ENCODE measurements at regions of chr6 and their contacts with region 1.

Region 1: GRCh38 chr6:167512696-167513375 is 187.9 kb downstream of the TTLL2 start:
- DNase-seq: no peak
- H3K4me3 ChIP-seq: no peak overlapping the region
- H3K27ac ChIP-seq: no peak overlapping the region
- H3K4me1 ChIP-seq: no peaks in the 10 kb centered on the region
- H3K27me3 ChIP-seq: peaks cover 0 to 5% of the 10 kb centered on the region in 2 donors
- CTCF ChIP-seq: no peak
- POLR2A ChIP-seq: no peak

Region 2: GRCh38 chr6:166333172-166333995 is 1179.5 kb before region 1 on chr6:
- intact Hi-C with region 1: no loop called
- DNase-seq: no peak
- H3K4me3 ChIP-seq: peak overlapping the region in 1 of 3 donors; percentile 26
- H3K27ac ChIP-seq: no peak overlapping the region
- H3K4me1 ChIP-seq: no peaks in the 10 kb centered on the region
- H3K27me3 ChIP-seq: no peaks in the 10 kb centered on the region
- CTCF ChIP-seq: no peak
- POLR2A ChIP-seq: no peak

Region 3: GRCh38 chr6:167455371-167455770 is 57.5 kb before region 1 on chr6:
- intact Hi-C with region 1: loop called (anchors 2 kb)
- DNase-seq: no peak
- H3K4me3 ChIP-seq: no peak overlapping the region
- H3K27ac ChIP-seq: no peak overlapping the region
- H3K4me1 ChIP-seq: no peaks in the 10 kb centered on the region
- H3K27me3 ChIP-seq: no peaks in the 10 kb centered on the region
- CTCF ChIP-seq: no peak
- POLR2A ChIP-seq: no peak

Region 4: DNA sequence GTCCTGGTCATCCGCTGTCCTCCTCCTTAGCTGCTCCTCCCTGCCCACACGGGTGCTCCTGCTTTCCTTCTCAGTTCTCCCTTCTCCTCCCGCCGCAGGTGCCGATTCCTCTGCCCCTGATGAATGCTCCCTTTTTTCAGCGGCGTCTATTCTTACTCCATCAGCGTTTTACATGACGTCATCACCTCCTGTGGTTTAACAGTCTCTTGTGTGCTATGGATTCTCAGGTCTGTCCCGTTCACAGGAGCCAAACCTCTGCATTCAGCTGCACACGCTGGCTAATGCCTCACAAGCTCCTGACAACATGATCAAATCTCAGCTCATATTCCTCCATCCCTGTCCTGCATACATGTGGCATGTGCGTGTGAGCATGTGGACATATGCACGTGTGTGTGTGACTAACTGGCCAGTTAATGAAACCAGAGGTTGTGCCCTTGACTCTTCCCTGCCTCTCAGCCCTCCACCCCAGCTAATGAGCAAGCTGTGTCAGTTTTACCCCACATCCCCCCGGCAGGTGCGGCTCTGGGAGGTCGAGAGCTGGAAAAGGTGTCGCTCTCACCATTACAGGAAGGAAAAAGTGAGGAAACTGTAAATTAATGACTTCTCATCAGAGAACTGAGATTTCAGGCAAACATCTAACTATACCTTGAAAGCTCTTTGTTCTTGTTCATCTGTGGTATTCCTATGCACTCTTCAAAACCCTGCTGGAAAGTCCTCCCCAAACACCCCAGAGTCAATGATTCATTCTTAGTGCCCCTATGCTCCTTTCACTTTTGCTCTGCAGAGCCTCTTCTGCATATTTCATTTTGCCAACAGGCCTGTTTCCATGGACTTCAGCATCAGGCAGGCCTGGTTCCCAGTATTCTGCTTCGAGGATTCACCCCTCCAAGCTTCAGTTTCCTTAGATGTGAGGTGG is 24.8 kb before region 1 on chr6:
- intact Hi-C with region 1: loop called (anchors 1 kb)
- DNase-seq: no peak
- H3K4me3 ChIP-seq: no peak overlapping the region
- H3K27ac ChIP-seq: no peak overlapping the region
- H3K4me1 ChIP-seq: no peaks in the 10 kb centered on the region
- H3K27me3 ChIP-seq: no peaks in the 10 kb centered on the region
- CTCF ChIP-seq: no peak
- POLR2A ChIP-seq: no peak

Region 5: DNA sequence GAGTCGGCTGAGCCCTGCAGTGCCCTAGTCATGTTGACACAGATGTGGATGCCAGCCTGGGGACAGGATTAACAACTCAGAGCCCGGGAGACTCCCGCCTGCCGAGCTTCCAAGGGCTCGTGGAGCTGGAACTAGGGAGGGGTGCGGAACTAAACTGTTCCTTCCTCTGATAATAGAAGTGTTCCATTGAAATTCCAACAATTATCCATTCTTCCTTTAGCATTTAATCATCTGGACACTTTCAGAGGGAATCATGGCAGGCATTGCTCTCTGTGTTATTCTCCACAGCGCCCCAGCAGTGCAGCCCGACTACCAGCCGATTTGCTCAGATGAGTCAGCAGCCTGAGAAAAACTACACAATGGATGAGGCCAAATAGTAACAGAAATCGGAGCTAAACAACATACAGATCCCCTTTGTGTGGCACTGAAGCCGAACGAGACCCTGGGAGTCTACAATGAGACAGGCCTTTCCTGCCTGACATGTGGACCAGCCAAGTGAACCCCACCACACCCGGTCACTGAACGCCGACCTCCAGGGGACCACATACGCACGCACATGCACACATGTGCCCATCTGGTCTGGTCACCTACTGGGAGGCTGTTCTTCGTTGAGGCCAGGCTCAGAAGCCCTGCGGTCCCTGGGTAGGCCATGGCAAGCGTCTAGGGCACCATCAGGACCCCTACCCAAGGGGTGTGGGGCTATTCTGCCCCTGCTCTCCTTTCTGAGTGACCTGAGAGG is 75.5 kb after region 1 on chr6:
- intact Hi-C with region 1: no loop called
- DNase-seq: peak in 1 of 2 donors; percentile 30
- H3K4me3 ChIP-seq: no peak overlapping the region
- H3K27ac ChIP-seq: no peak overlapping the region
- H3K4me1 ChIP-seq: no peaks in the 10 kb centered on the region
- H3K27me3 ChIP-seq: no peaks in the 10 kb centered on the region
- CTCF ChIP-seq: no peak
- POLR2A ChIP-seq: no peak